ENCODE measurements at regions of chr6 and their contacts with region 1.

Region 1: GRCh38 chr6:109382576-109383437 is 540 bp upstream of the CD164 start:
- DNase-seq: peak; percentile 91 to 96 (median 94)
- H3K4me3 ChIP-seq: peak overlapping the region; percentile 75 to 99 (median 88)
- H3K4me3 Mint-ChIP-seq: peak overlapping the region; percentile 91 to 95
- H3K27ac ChIP-seq: peak overlapping the region; percentile 99 to 100
- H3K27ac Mint-ChIP-seq: peak overlapping the region; percentile 99 to 100 (median 100)
- H3K4me1 ChIP-seq: peaks cover 44 to 50% of the 10 kb centered on the region in 2 donors
- H3K4me1 Mint-ChIP-seq: peaks cover 53% of the 10 kb centered on the region
- H3K27me3 ChIP-seq: no peaks in the 10 kb centered on the region
- H3K27me3 Mint-ChIP-seq: no peaks in the 10 kb centered on the region
- CTCF ChIP-seq: no peak

Region 2: DNA sequence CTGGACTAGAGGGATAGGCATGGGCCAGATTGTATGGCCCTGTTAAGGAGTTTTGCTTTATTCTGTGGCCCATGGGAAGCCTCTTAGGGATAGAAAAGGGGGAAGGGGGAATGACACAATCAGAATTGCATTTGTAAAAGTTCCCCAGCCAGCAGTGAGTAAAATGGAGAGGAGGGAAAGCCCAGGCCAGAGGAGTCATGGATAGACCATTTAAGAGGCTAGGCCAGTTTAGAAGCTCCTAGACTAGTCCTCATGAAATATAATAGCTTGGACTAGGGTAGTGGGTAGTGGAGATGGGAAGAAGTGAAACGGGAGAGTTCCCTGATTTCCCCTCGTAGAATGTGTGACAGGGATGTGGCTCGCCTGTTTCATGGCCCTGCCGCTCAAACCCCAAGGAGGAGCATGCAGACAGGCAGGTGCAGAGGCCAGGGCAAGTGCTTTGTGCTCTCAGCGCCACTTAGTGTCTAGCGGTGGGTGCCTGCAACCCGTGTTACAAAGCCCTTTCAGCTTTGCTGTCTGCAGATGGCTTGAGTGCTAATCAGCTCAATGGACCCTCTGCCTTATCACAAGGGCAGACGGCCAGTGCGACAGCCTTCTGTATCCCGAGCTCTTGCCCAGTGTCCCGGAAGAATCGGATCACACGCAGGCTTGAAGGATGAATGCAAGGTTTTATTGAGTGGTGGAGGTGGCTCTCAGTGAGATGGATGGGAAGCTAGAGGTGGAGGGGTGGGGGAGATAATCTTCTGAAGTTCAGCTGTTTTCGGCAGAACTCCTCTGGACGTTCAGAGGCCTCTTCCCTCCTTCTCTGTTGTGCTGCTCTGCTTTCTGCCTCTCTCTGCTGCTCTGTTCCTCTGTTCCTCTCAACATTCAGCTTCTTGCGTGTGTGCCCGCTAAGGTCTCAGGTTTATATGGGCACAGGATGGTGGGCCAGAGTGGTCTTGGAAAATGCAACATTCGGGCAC is 146.4 kb before region 1 on chr6:
- intact Hi-C with region 1: loop called in 1 of 2 experiments (anchors 5 kb)
- DNase-seq: peak; percentile 27 to 88 (median 58)
- H3K4me3 ChIP-seq: peak overlapping the region in 1 of 3 experiments; percentile 56
- H3K4me3 Mint-ChIP-seq: peak overlapping the region; percentile 62 to 79
- H3K27ac ChIP-seq: peak overlapping the region; percentile 92 to 96
- H3K27ac Mint-ChIP-seq: peak overlapping the region; percentile 96 to 99 (median 99)
- H3K4me1 ChIP-seq: peaks cover 59 to 66% of the 10 kb centered on the region in 2 donors
- H3K4me1 Mint-ChIP-seq: peaks cover 59% of the 10 kb centered on the region
- H3K27me3 ChIP-seq: no peaks in the 10 kb centered on the region
- H3K27me3 Mint-ChIP-seq: peaks cover 0 to 2% (median 0%) of the 10 kb centered on the region in 3 donors
- CTCF ChIP-seq: no peak

Region 3: DNA sequence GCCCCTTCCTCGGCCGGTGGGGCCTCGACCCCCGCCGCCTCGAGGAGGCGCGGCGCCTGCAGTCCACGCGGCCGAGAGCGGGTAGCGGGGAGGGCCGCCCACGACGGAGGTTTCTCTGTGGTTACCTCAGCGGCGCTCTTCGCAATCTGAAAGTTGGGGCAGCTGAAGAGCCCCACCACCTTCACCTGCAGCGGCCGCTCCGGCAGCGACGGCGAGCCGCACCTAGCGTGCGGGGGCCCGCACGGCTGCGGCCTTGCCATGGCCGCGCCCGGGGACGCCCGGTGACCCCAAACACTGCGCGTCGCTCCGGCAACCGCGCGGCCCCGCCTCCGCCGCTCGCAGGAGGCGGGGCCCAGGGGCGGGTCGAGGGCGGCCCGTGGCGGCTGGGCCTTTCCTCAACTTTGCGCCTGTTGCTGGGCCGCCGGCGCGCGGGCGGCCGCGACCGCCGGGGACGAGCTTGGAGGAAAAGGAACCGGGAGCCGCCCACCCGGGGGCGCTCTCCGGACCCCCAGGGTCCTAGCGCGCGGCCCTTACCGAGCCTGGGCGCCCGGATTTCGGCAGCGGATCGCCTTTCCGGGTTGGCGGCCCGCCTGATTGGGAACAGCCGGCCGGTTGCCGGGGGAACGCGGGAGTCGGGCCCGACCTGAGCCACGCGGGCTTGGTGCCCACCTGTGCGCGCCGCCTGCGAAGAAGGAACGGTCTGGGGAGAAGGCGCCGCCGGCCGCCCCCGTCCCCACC is 57.7 kb after region 1 on chr6 and contains the starts of genes PPIL6 and SMPD2:
- intact Hi-C with region 1: loop called in 1 of 2 experiments (anchors 2 kb)
- DNase-seq: peak; percentile 73 to 84 (median 81)
- H3K4me3 ChIP-seq: peak within 1 kb of the TSS; percentile 52 to 87 (median 71)
- H3K4me3 Mint-ChIP-seq: peak within 1 kb of the TSS; percentile 96
- H3K27ac ChIP-seq: peak within 1 kb of the TSS; percentile 53 to 85
- H3K27ac Mint-ChIP-seq: peak within 1 kb of the TSS; percentile 87 to 97 (median 92)
- H3K4me1 ChIP-seq: peaks cover 20 to 32% of the 10 kb centered on the region in 2 donors
- H3K4me1 Mint-ChIP-seq: peaks cover 34% of the 10 kb centered on the region
- H3K27me3 ChIP-seq: peaks cover 0 to 4% of the 10 kb centered on the region in 2 donors
- H3K27me3 Mint-ChIP-seq: peaks cover 1 to 9% (median 4%) of the 10 kb centered on the region in 3 donors
- CTCF ChIP-seq: peak; percentile 25
- polyA plus RNA-seq, gene PPIL6: 0.09 to 0.28 (median 0.14) TPM
- polyA plus RNA-seq, gene SMPD2: 9.5 to 14.3 (median 12.3) TPM

Region 4: DNA sequence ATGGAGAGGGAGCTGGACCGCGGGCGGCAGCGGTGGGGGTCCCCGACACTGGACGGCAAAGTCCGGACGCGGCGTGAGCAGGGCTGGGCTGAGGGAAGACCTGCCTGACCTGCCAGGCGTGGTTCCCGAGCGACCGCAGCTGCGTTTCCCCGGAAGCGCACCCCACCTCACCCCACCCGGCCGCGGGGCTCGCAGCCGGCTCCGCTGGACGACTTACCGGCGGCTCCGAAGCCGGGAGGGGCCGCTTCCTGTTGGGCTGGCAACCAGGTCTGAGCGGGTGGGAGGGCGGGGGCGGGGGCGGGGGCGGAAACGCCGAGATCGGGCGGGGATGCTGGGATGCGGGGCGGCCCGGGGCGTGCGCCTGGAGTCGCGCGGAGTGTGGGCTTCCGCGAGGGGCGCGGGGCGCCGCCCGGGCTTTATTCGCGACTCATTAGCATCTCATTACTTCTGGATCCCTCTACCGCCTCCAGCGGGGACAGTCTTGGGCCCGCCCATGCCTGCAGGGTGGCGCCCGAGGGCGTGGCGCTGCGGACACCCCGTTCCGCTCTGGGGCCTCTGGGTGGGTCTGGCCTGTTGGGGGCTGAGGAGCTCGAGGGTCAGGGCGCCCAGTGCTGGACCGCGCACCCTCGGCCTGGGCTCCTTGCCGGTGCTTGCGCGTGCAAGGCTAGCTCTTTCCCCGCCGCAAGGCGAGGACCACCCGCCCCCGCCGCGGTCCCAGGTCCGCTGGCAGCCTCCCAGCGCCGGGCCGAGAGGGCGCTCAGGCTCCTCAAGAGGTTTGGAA is 72.9 kb after region 1 on chr6 and contains the start of gene MICAL1:
- intact Hi-C with region 1: loop called in 1 of 2 experiments (anchors 5 kb)
- DNase-seq: peak; percentile 72 to 78 (median 77)
- H3K4me3 ChIP-seq: peak within 1 kb of the TSS; percentile 51 to 97 (median 78)
- H3K4me3 Mint-ChIP-seq: peak within 1 kb of the TSS; percentile 96 to 98
- H3K27ac ChIP-seq: peak within 1 kb of the TSS; percentile 84 to 93
- H3K27ac Mint-ChIP-seq: peak within 1 kb of the TSS; percentile 88 to 99 (median 97)
- H3K4me1 ChIP-seq: peaks cover 49 to 57% of the 10 kb centered on the region in 2 donors
- H3K4me1 Mint-ChIP-seq: peaks cover 51% of the 10 kb centered on the region
- H3K27me3 ChIP-seq: no peaks in the 10 kb centered on the region
- H3K27me3 Mint-ChIP-seq: no peaks in the 10 kb centered on the region
- CTCF ChIP-seq: peak; percentile 35
- polyA plus RNA-seq, gene MICAL1: 7.5 to 227 (median 13.2) TPM

Measured in CD14-positive monocyte (primary cell).